Mammary epithelial cell (primary cell): ENCODE measurements at regions of chr10 and their contacts with region 1.

Region 1: GRCh38 chr10:71212318-71213126 is at the start of gene UNC5B:
- DNase-seq: peak; percentile 90
- H3K4me3 ChIP-seq: peak within 1 kb of the TSS; percentile 70 to 81 (median 72)
- H3K27ac ChIP-seq: peak within 1 kb of the TSS; percentile 25
- H3K4me1 ChIP-seq: peaks cover 30% of the 10 kb centered on the region
- H3K27me3 ChIP-seq: peaks cover 19% of the 10 kb centered on the region
- CTCF ChIP-seq: peak in 1 of 2 donors; percentile 9
- total RNA-seq, gene UNC5B: 7.2 to 10.0 TPM

Region 2: DNA sequence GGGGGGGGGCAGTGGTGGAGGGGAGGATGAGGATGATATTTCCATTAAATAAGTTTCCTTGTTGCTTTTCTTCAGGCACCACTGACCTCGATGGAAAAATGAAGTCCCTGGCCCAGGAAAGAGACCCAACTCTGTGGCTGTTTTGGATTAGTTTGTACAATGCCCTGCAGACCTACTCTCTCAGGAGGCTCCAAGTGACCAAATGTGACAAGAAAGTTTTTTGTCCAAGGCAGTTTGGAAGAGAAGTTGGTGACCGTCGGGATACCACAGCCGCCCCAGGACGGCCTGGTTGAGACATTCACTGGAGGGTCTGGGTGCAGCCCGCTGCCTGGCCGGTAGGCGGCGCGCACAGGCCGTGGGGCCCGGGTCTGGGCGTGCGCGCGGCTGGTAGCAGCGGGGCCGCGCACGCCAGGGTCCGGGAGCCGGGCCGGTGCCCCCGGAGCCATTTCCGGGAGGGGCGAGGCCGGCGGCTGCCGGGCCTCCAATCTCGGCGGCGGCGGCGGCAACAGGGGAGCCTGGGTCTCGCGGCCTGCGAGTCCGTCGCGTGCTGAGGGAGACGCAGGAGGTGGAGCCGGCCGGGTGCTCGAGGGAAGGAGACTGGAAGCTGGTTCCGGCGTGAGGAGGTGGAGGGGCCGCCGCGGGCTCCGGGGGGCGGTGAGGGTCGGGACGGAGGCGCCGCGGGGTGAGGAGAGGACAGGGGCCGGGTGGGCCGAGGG is 396.9 kb before region 1 on chr10 and contains the start of gene SGPL1:
- CTCF ChIA-PET with region 1: no interaction called
- dilution Hi-C with region 1: no loop called
- in situ Hi-C with region 1: no loop called
- intact Hi-C with region 1: loop called (anchors 5 kb)
- DNase-seq: peak; percentile 81
- H3K4me3 ChIP-seq: peak within 1 kb of the TSS; percentile 63 to 71 (median 66)
- H3K27ac ChIP-seq: peak within 1 kb of the TSS; percentile 69
- H3K4me1 ChIP-seq: no peaks in the 10 kb centered on the region
- H3K27me3 ChIP-seq: no peaks in the 10 kb centered on the region
- CTCF ChIP-seq: peak; percentile 86 to 90
- total RNA-seq, gene SGPL1: 65.0 to 97.4 TPM

Region 3: GRCh38 chr10:70880077-70880534 is 332.4 kb before region 1 on chr10:
- CTCF ChIA-PET with region 1: no interaction called
- dilution Hi-C with region 1: no loop called
- in situ Hi-C with region 1: no loop called
- intact Hi-C with region 1: no loop called
- DNase-seq: peak; percentile 54
- H3K4me3 ChIP-seq: no peak overlapping the region
- H3K27ac ChIP-seq: no peak overlapping the region
- H3K4me1 ChIP-seq: no peaks in the 10 kb centered on the region
- H3K27me3 ChIP-seq: no peaks in the 10 kb centered on the region
- CTCF ChIP-seq: peak; percentile 92 to 94

Region 4: GRCh38 chr10:70925377-70926225 is 286.9 kb before region 1 on chr10:
- CTCF ChIA-PET with region 1: interaction called, 4 read pairs
- dilution Hi-C with region 1: no loop called
- in situ Hi-C with region 1: loop called (anchors 10 kb)
- intact Hi-C with region 1: loop called (anchors 1 kb)
- DNase-seq: no peak
- H3K4me3 ChIP-seq: no peak overlapping the region
- H3K27ac ChIP-seq: no peak overlapping the region
- H3K4me1 ChIP-seq: peaks cover 6% of the 10 kb centered on the region
- H3K27me3 ChIP-seq: peaks cover 2% of the 10 kb centered on the region
- CTCF ChIP-seq: peak; percentile 79 to 96

Region 5: GRCh38 chr10:70967596-70968587 is 244.6 kb before region 1 on chr10:
- CTCF ChIA-PET with region 1: no interaction called
- dilution Hi-C with region 1: no loop called
- in situ Hi-C with region 1: no loop called
- intact Hi-C with region 1: no loop called
- DNase-seq: no peak
- H3K4me3 ChIP-seq: no peak overlapping the region
- H3K27ac ChIP-seq: no peak overlapping the region
- H3K4me1 ChIP-seq: no peaks in the 10 kb centered on the region
- H3K27me3 ChIP-seq: no peaks in the 10 kb centered on the region
- CTCF ChIP-seq: no peak

Region 6: GRCh38 chr10:71010730-71011129 is 201.8 kb before region 1 on chr10:
- CTCF ChIA-PET with region 1: no interaction called
- dilution Hi-C with region 1: no loop called
- in situ Hi-C with region 1: no loop called
- intact Hi-C with region 1: loop called (anchors 1 kb)
- DNase-seq: no peak
- H3K4me3 ChIP-seq: no peak overlapping the region
- H3K27ac ChIP-seq: no peak overlapping the region
- H3K4me1 ChIP-seq: no peaks in the 10 kb centered on the region
- H3K27me3 ChIP-seq: peaks cover 3% of the 10 kb centered on the region
- CTCF ChIP-seq: peak in 1 of 2 donors; percentile 28

Region 7: DNA sequence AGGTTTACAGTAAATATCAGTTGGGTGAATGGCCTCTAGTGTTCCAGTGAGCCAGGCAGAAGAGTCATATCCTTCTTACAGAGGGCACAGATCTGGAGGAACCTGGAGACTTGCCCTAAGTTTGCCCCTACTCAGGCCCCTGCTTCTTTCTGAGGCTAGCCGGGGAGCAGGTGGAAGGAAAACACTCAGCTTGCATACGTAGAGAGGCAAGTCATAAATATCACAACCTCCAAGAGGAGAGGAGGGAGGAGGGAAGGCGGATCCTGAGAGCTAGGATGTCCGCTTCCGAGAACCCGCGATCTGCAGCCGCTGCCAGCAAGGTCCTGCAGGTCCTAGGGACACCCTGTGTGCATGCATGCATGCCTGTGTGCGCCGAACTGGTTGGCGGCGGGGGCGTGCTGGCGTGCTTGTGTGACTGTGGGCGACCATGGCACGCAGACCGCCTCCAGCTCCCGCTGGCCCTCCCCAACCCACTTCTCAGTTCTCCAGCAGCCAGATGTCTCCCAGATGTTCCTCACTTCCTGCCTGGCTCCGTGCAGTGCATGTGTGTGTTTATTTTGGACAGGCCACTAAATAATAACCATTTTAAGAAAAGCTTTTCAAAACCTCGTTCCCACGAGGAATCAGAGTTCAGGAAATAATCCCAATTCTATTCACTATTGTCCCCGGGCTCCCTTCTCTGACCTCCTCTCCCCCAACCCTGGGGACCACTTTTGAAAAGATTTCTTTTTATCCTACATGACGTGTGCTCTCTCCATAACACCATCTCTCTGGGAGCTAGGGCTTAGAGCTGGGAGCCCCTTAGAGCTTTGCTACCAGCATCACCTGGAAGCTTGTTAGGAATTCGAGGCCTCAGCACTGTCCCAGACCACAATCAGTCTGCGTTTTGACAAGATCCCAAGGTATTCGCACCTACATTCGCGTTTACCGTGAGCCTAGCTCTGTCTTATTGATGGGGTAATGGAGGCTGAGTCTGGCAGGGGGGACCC is 32.2 kb after region 1 on chr10:
- CTCF ChIA-PET with region 1: no interaction called
- dilution Hi-C with region 1: no loop called
- in situ Hi-C with region 1: no loop called
- intact Hi-C with region 1: loop called (anchors 1 kb)
- DNase-seq: no peak
- H3K4me3 ChIP-seq: no peak overlapping the region
- H3K27ac ChIP-seq: peak overlapping the region; percentile 30
- H3K4me1 ChIP-seq: peaks cover 61% of the 10 kb centered on the region
- H3K27me3 ChIP-seq: no peaks in the 10 kb centered on the region
- CTCF ChIP-seq: no peak

Region 8: GRCh38 chr10:71270301-71271220 is 58.0 kb after region 1 on chr10:
- CTCF ChIA-PET with region 1: interaction called, 4 read pairs
- dilution Hi-C with region 1: no loop called
- in situ Hi-C with region 1: no loop called
- intact Hi-C with region 1: loop called (anchors 1 kb)
- DNase-seq: peak; percentile 31
- H3K4me3 ChIP-seq: no peak overlapping the region
- H3K27ac ChIP-seq: no peak overlapping the region
- H3K4me1 ChIP-seq: peaks cover 6% of the 10 kb centered on the region
- H3K27me3 ChIP-seq: no peaks in the 10 kb centered on the region
- CTCF ChIP-seq: peak; percentile 63 to 71